ENCODE measurements at regions of chr3 and their contacts with region 1.

Region 1: GRCh38 chr3:172595641-172596393 is 72.6 kb upstream of the TNFSF10 start:
- DNase-seq: peak; percentile 72
- H3K4me3 Mint-ChIP-seq: peak overlapping the region; percentile 74
- H3K27ac Mint-ChIP-seq: peak overlapping the region; percentile 84
- H3K4me1 Mint-ChIP-seq: peaks cover 62% of the 10 kb centered on the region
- H3K27me3 Mint-ChIP-seq: no peaks in the 10 kb centered on the region

Region 2: GRCh38 chr3:172476347-172476746 is 119.5 kb before region 1 on chr3:
- CTCF ChIA-PET with region 1: interaction called, 13 read pairs
- POLR2A ChIA-PET with region 1: no interaction called
- DNase-seq: no peak
- H3K4me3 Mint-ChIP-seq: peak overlapping the region; percentile 5
- H3K27ac Mint-ChIP-seq: no peak overlapping the region
- H3K4me1 Mint-ChIP-seq: peaks cover 21% of the 10 kb centered on the region
- H3K27me3 Mint-ChIP-seq: peaks cover 17% of the 10 kb centered on the region

Region 3: GRCh38 chr3:172511783-172512762 is 83.7 kb before region 1 on chr3:
- CTCF ChIA-PET with region 1: interaction called, 30 read pairs
- POLR2A ChIA-PET with region 1: interaction called, 4 read pairs
- DNase-seq: peak; percentile 71
- H3K4me3 Mint-ChIP-seq: peak overlapping the region; percentile 54
- H3K27ac Mint-ChIP-seq: peak overlapping the region; percentile 88
- H3K4me1 Mint-ChIP-seq: peaks cover 91% of the 10 kb centered on the region
- H3K27me3 Mint-ChIP-seq: no peaks in the 10 kb centered on the region

Region 4: DNA sequence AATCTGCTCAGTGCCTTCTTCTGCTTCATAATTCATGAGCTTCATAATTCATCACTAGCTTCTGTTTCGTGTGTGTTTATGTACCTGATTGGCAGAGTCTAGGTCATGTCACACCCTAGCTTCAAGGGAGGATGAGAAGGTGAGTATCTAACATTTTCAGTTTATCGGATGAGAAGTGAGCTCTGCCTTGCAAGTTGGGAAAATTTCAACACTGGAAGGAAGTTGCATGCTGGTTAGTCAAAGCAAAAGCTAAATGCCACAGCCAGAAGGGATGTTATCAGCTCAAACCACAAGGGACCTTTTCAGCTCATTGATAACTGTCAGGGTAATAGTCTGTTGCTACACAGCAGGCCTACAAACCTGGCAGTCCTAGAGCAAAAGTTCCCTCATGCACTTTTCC is 65.3 kb before region 1 on chr3:
- CTCF ChIA-PET with region 1: interaction called, 28 read pairs
- POLR2A ChIA-PET with region 1: interaction called, 6 read pairs
- DNase-seq: peak; percentile 51
- H3K4me3 Mint-ChIP-seq: peak overlapping the region; percentile 8
- H3K27ac Mint-ChIP-seq: peak overlapping the region; percentile 82
- H3K4me1 Mint-ChIP-seq: peaks cover 45% of the 10 kb centered on the region
- H3K27me3 Mint-ChIP-seq: no peaks in the 10 kb centered on the region

Region 5: GRCh38 chr3:172607305-172608121 is 11.7 kb after region 1 on chr3:
- CTCF ChIA-PET with region 1: interaction called, 25 read pairs
- POLR2A ChIA-PET with region 1: no interaction called
- DNase-seq: no peak
- H3K4me3 Mint-ChIP-seq: no peak overlapping the region
- H3K27ac Mint-ChIP-seq: no peak overlapping the region
- H3K4me1 Mint-ChIP-seq: no peaks in the 10 kb centered on the region
- H3K27me3 Mint-ChIP-seq: no peaks in the 10 kb centered on the region

Region 6: GRCh38 chr3:172622916-172623700 is 27.3 kb after region 1 on chr3:
- CTCF ChIA-PET with region 1: interaction called, 12 read pairs
- POLR2A ChIA-PET with region 1: no interaction called
- DNase-seq: peak; percentile 55
- H3K4me3 Mint-ChIP-seq: no peak overlapping the region
- H3K27ac Mint-ChIP-seq: no peak overlapping the region
- H3K4me1 Mint-ChIP-seq: peaks cover 9% of the 10 kb centered on the region
- H3K27me3 Mint-ChIP-seq: no peaks in the 10 kb centered on the region

Measured in activated CD4-positive, alpha-beta T cell treated with anti-CD3 and anti-CD28 coated beads, Interleukin-2, amount 10 ng/mL, durations not matched to agents 7 days and 5 days (primary cell).